ENCODE measurements at regions of chr2 and their contacts with region 1.

Region 1: GRCh38 chr2:172095146-172095904 is 7.4 kb downstream of the DLX2 start:
- DNase-seq: peak; percentile 87
- H3K4me3 Mint-ChIP-seq: peak overlapping the region; percentile 77
- H3K27ac Mint-ChIP-seq: peak overlapping the region; percentile 22
- H3K4me1 Mint-ChIP-seq: peaks cover 32% of the 10 kb centered on the region
- H3K27me3 Mint-ChIP-seq: no peaks in the 10 kb centered on the region
- CTCF ChIP-seq: no peak

Region 2: GRCh38 chr2:171893824-171894611 is 201.3 kb before region 1 on chr2 and contains the start of gene SLC25A12:
- CTCF ChIA-PET with region 1: interaction called, 3 read pairs
- POLR2A ChIA-PET with region 1: interaction called, 12 read pairs
- intact Hi-C with region 1: loop called (anchors 10 kb)
- DNase-seq: peak; percentile 85
- H3K4me3 Mint-ChIP-seq: peak within 1 kb of the TSS; percentile 99
- H3K27ac Mint-ChIP-seq: peak within 1 kb of the TSS; percentile 91
- H3K4me1 Mint-ChIP-seq: peaks cover 27% of the 10 kb centered on the region
- H3K27me3 Mint-ChIP-seq: no peaks in the 10 kb centered on the region
- CTCF ChIP-seq: no peak
- total RNA-seq, gene SLC25A12: 11.5 and 12.5 TPM in 2 replicates

Region 3: GRCh38 chr2:171922230-171923022 is 172.9 kb before region 1 on chr2 and contains the start of gene HAT1:
- CTCF ChIA-PET with region 1: no interaction called
- POLR2A ChIA-PET with region 1: interaction called, 19 read pairs
- intact Hi-C with region 1: no loop called
- DNase-seq: peak; percentile 98
- H3K4me3 Mint-ChIP-seq: peak within 1 kb of the TSS; percentile 90
- H3K27ac Mint-ChIP-seq: peak within 1 kb of the TSS; percentile 97
- H3K4me1 Mint-ChIP-seq: peaks cover 16% of the 10 kb centered on the region
- H3K27me3 Mint-ChIP-seq: no peaks in the 10 kb centered on the region
- CTCF ChIP-seq: no peak
- total RNA-seq, gene HAT1: 40.7 and 41.8 TPM in 2 replicates

Region 4: DNA sequence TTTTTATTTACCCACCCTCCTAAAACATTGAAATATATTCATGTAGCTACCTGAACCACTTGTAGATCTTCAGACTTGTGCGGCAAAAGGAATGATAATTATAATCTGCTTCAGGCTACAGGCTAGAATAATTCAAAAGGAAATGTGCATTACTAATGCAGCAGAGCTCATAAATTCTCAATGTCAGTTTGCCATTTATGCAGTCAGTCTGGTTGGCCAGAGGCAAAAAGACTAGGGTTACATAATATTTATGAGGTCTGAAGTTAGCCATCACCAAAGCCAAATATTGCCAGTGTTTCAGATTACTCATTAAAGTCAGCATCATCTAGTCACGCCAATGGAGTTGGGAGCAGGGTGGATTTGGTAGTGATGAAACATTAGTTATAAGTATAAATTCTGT is 56.7 kb before region 1 on chr2:
- CTCF ChIA-PET with region 1: interaction called, 3 read pairs
- POLR2A ChIA-PET with region 1: interaction called, 20 read pairs
- intact Hi-C with region 1: no loop called
- DNase-seq: peak; percentile 90
- H3K4me3 Mint-ChIP-seq: no peak overlapping the region
- H3K27ac Mint-ChIP-seq: no peak overlapping the region
- H3K4me1 Mint-ChIP-seq: peaks cover 10% of the 10 kb centered on the region
- H3K27me3 Mint-ChIP-seq: no peaks in the 10 kb centered on the region
- CTCF ChIP-seq: no peak

Region 5: GRCh38 chr2:172084734-172085459 is 10.4 kb before region 1 on chr2:
- CTCF ChIA-PET with region 1: interaction called, 4 read pairs
- POLR2A ChIA-PET with region 1: interaction called, 55 read pairs
- intact Hi-C with region 1: no loop called
- DNase-seq: peak; percentile 96
- H3K4me3 Mint-ChIP-seq: peak overlapping the region; percentile 80
- H3K27ac Mint-ChIP-seq: peak overlapping the region; percentile 47
- H3K4me1 Mint-ChIP-seq: no peaks in the 10 kb centered on the region
- H3K27me3 Mint-ChIP-seq: no peaks in the 10 kb centered on the region
- CTCF ChIP-seq: no peak

Region 6: GRCh38 chr2:172131713-172132555 is 36.6 kb after region 1 on chr2:
- CTCF ChIA-PET with region 1: interaction called, 3 read pairs
- POLR2A ChIA-PET with region 1: interaction called, 15 read pairs
- intact Hi-C with region 1: no loop called
- DNase-seq: no peak
- H3K4me3 Mint-ChIP-seq: no peak overlapping the region
- H3K27ac Mint-ChIP-seq: peak overlapping the region; percentile 27
- H3K4me1 Mint-ChIP-seq: peaks cover 8% of the 10 kb centered on the region
- H3K27me3 Mint-ChIP-seq: no peaks in the 10 kb centered on the region
- CTCF ChIP-seq: no peak